Panc1 (cell line): ENCODE measurements at regions of chr10 and their contacts with region 1.

Region 1: DNA sequence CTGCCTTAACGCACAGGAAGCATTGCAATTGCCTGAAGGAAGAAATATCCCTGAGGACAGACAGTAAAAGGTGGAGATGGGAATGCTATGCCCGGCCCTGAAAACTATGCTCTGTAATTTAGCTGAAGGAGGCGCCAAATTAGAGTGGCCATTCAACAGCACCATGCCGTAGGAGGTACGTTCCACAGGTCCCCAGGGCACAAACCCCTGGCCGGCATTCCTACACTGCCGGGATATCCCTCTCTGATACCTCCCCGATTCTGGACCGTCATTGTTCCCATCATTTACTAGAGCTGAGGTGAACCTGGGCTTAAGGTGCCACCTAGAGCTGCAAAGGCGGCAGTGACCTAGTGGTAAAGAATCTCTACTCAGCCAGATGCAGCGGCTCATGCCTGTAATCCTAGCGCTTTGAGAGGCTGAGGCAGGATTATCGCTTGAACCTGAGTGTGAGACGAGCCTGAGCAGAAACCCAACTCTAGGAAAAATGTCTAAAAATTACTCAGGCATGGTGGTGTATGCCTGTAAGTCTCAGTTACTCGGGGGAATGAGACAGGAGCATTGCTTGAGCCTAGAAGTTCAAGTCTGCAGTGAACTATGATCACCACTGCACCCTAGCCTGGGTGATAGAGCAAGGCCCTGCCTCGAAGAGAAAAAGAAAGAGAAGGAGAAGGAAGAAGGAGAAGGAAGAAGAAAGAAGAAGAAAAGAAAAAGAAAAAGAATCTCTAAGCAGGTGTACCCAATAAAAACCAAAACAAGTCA is 53.0 kb upstream of the TNKS2 start:
- DNase-seq: peak; percentile 30
- ATAC-seq: peak; percentile 99
- H3K4me3 ChIP-seq: peak overlapping the region in 1 of 2 experiments; percentile 45; a peak in 2 of 4 replicates
- H3K27ac ChIP-seq: no peak overlapping the region
- H3K4me1 ChIP-seq: peaks cover 7% of the 10 kb centered on the region; the same call in 1 of the 2 replicates
- H3K27me3 ChIP-seq: peaks cover 4% of the 10 kb centered on the region
- CTCF ChIP-seq: peak; percentile 89

Region 2: DNA sequence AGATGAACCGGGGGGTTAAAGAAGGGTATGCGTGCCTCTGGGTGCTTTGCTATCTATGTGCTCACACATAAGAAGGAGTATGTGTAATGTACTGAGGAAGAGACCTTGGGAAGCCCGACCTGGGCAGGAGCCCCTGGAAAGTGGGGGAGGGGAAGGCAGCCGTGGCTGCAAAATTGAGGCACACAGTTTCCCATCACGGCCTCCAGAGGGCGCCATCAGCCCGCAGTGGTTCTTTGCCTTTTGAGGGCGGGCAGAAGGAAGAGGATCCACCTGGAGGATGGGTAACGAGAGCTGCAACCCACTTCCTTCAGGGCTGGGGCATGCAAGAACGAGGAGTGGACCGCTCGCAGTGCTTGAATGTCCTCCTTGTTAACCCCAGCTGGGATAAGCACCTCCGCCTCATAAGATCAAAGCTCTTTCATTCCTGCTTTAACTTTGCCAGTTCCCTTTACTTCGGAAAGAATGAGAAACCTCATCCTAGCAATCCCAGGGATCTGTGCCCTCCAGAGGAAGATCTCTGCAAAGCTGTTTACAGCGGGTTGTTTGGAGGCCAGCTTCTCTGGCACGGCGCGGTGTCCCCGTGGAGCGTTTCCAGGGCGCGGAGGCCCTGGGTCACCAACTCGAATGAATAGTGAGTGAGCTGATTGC is 446.9 kb before region 1 on chr10:
- CTCF ChIA-PET with region 1: interaction called, 5 read pairs
- POLR2A ChIA-PET with region 1: no interaction called
- in situ Hi-C with region 1: no loop called
- intact Hi-C with region 1: loop called (anchors 5 kb)
- DNase-seq: peak; percentile 71
- ATAC-seq: peak; percentile 97
- H3K4me3 ChIP-seq: peak overlapping the region; percentile 44 to 81
- H3K27ac ChIP-seq: peak overlapping the region; percentile 64
- H3K4me1 ChIP-seq: no peaks in the 10 kb centered on the region; the same call in 1 of the 2 replicates
- H3K27me3 ChIP-seq: no peaks in the 10 kb centered on the region
- CTCF ChIP-seq: peak; percentile 99

Region 3: DNA sequence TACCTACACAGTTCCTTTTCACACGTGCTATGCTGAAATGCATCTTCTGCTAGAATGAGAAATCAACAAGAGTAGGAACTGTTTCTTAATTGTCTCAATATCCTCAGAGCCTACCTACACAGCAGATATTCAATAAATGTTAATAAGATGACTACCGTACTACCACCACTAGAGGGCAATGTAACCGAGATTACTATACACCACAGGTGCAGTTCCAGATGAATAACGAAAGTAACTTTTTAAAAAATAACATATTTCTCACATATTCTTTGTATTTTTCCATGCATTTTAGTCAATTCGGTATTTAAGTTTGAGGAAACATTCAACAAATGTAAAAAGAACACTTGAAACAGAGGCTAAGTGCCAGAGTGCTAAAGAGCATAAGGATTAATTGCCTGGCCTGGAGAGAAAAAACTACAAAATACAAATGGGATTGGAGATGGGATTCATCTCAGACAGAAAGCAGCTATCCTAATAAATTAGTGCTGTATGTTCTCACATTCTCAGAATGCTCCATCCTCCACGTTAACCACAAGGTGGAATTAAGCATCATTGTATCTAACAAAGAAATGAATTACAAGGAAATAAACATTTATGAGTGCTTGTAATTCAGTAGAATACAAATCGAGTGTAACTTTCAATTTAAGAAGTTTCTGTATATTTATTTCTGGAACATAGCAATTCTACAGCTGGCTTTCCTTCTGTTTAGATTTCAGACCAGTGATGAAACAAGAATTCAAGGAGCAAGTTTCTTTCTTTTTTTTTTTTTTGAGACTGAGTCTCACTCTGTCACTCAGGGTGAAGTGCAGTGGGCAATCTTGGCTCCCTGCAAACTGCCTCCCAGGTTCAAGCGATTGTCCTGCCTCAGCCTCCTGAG is 355.4 kb before region 1 on chr10:
- CTCF ChIA-PET with region 1: no interaction called
- POLR2A ChIA-PET with region 1: interaction called, 4 read pairs
- in situ Hi-C with region 1: no loop called
- intact Hi-C with region 1: loop called (anchors 5 kb)
- DNase-seq: no peak
- ATAC-seq: peak; percentile 93
- H3K4me3 ChIP-seq: no peak overlapping the region
- H3K27ac ChIP-seq: no peak overlapping the region
- H3K4me1 ChIP-seq: no peaks in the 10 kb centered on the region
- H3K27me3 ChIP-seq: peaks cover 21% of the 10 kb centered on the region
- CTCF ChIP-seq: peak; percentile 73; the same call in 1 of the 2 replicates

Region 4: DNA sequence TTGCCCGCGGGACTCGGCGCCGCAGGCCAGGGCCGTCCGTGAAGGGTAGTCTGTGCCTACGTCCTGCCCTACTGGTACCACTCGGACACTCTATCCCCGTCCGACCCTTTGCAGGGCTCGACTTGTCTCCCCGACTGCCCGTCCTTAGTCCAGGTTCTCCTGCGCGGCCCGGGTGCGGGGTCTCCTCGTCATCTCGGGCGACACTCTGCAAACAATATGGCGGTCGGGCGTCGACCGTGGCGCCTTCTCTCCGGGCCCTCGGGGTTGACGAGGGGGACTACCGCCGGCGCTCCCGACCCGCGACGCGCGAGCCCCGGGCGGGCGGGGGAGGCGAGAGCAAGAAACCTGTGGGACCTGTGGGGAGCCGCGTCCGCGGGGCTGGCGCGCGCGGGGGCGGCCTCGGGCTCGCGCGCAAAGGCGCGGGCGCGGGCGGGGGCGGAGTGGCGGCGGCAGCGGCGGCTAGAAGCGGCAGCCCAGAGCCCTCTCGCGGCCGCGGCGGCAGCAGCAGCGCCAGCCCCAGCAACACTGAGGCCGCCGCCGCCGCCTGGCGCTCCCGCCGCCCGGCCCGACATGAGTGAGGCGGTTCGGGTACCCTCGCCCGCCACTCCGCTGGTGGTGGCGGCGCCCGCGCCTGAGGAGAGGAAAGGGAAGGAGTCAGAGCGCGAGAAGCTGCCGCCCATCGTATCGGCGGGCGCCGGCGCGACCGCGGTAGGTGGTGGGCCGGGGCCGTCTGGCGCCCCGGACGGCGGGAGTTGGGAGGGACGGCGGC is 335.2 kb before region 1 on chr10 and contains the start of gene HECTD2:
- CTCF ChIA-PET with region 1: no interaction called
- POLR2A ChIA-PET with region 1: no interaction called
- in situ Hi-C with region 1: no loop called
- intact Hi-C with region 1: loop called (anchors 5 kb)
- DNase-seq: peak; percentile 10
- ATAC-seq: peak; percentile 94
- H3K4me3 ChIP-seq: peak within 1 kb of the TSS; percentile 82 to 89
- H3K27ac ChIP-seq: peak within 1 kb of the TSS; percentile 94
- H3K4me1 ChIP-seq: peaks cover 17% of the 10 kb centered on the region
- H3K27me3 ChIP-seq: no peaks in the 10 kb centered on the region; the same call in 1 of the 2 replicates
- CTCF ChIP-seq: peak; percentile 89
- total RNA-seq, gene HECTD2: 11.5 TPM

Region 5: DNA sequence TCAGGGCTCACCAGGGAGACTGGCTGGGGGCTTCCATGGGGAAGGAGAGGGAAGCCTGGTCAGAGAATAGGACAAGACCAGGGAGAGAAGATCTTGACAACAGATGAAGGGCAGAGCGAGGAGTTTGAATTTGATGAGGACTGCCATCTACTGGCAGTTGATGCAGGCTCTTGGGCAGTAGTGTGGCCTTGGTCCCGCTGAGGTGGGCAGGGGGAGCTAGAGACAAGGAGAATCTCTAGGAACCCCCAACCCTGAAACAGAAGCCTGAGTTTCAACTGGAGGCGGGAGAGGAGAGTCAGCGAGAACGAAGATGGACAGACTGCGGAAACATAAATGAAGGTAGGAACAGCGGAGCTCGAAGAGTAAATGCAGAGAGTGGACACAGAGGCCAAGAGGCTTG is 193.4 kb before region 1 on chr10:
- CTCF ChIA-PET with region 1: no interaction called
- POLR2A ChIA-PET with region 1: no interaction called
- in situ Hi-C with region 1: no loop called
- intact Hi-C with region 1: loop called (anchors 5 kb)
- DNase-seq: peak; percentile 33
- ATAC-seq: peak; percentile 86
- H3K4me3 ChIP-seq: no peak overlapping the region
- H3K27ac ChIP-seq: no peak overlapping the region
- H3K4me1 ChIP-seq: no peaks in the 10 kb centered on the region
- H3K27me3 ChIP-seq: no peaks in the 10 kb centered on the region
- CTCF ChIP-seq: peak; percentile 86

Region 6: DNA sequence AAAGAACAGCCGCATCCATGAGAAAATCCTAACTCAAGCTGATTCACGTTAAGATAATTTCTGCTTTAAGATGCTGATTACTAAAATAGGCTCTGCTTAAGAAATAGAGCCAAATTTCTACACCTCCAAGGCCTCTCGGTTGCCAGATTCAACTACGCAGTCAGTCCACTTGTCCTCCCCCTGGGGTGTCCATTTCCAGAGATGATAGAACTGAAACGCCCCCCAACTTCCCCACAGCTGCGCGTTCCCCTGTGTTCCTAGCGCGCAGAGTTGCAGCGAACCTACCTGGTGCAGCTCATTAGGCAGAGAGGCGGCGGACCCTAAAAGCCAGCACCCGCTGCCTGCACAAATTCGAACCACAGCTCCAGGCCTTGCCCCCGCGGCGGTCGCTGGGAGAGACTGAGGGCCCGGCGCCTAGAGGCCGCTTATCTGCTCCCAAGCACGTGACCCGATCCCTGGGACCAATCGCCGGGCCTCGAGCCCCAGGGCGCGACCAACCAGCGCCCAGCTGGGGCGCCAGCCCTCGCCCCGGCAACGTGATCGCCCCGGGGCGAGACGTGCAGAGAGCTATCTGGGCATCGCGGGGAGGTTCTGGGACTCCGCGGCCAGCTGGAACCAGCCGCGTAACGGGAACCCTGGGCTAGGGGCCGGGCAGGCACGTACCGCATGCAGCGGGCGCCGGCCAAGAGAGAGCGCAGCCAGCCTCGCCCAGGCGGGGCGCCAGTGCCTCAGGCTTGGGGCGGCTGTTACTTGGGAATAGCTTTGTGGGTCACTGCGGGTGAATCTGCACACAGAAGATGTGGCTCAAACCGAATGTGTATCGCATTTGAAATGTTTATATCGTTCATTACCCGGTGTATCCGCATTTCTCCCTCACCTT is 112.3 kb before region 1 on chr10 and contains the start of gene PPP1R3C:
- CTCF ChIA-PET with region 1: no interaction called
- POLR2A ChIA-PET with region 1: no interaction called
- in situ Hi-C with region 1: no loop called
- intact Hi-C with region 1: loop called (anchors 2 kb)
- DNase-seq: peak; percentile 42
- ATAC-seq: peak; percentile 95
- H3K4me3 ChIP-seq: peak within 1 kb of the TSS; percentile 57 to 62
- H3K27ac ChIP-seq: peak within 1 kb of the TSS; percentile 45
- H3K4me1 ChIP-seq: peaks cover 7% of the 10 kb centered on the region; the same call in 1 of the 2 replicates
- H3K27me3 ChIP-seq: peaks cover 13% of the 10 kb centered on the region
- CTCF ChIP-seq: peak; percentile 75
- total RNA-seq, gene PPP1R3C: 1.2 TPM

Region 7: DNA sequence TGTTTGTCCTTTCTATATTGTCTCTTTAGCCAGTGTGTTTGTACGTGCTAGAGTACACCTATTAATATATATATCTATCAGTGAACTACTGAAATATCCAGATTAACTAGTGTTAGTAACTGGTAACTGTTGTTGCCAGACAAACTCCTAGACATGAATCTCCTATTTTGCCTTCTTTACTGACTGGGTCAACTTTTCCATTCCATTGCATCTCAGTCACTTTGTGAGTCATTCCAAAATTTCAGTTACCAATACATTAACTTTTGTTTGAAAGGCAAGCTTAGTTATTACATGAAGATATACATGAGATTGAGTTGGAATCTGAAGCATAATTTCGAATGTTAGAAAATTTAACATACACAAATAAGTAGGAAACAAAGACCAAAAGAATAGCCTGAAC is 229.7 kb after region 1 on chr10:
- CTCF ChIA-PET with region 1: no interaction called
- POLR2A ChIA-PET with region 1: no interaction called
- in situ Hi-C with region 1: no loop called
- intact Hi-C with region 1: no loop called
- DNase-seq: peak; percentile 8
- ATAC-seq: no peak
- H3K4me3 ChIP-seq: no peak overlapping the region
- H3K27ac ChIP-seq: no peak overlapping the region
- H3K4me1 ChIP-seq: no peaks in the 10 kb centered on the region
- H3K27me3 ChIP-seq: no peaks in the 10 kb centered on the region
- CTCF ChIP-seq: no peak

Region 8: DNA sequence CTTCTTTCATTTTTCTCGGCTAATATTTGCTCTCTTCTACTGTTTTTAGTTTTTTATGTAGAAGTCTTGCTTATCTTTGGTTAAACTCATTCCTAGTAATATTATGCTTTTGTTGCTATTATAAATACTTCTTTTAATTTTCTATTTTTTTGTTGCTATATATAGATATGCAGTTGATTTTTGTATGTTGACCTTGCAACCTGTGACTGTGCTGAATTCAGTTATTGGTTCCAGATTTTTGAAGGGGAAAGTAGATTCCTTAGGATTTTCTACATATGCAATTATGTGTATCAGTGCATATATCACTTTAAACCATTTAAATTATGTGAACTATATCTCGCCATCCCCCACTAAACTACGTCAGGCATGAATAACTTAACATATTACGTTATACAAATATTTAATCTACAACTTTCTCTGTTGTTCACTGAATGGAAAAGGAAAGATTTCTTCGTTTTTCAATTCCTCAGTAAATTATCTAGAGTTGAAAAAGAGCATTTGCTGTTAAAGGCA is 757.1 kb after region 1 on chr10:
- CTCF ChIA-PET with region 1: no interaction called
- POLR2A ChIA-PET with region 1: interaction called, 15 read pairs
- in situ Hi-C with region 1: no loop called
- intact Hi-C with region 1: no loop called
- DNase-seq: no peak
- ATAC-seq: no peak
- H3K4me3 ChIP-seq: no peak overlapping the region
- H3K27ac ChIP-seq: no peak overlapping the region
- H3K4me1 ChIP-seq: no peaks in the 10 kb centered on the region
- H3K27me3 ChIP-seq: no peaks in the 10 kb centered on the region
- CTCF ChIP-seq: no peak